ENCODE measurements at regions of chr2 and their contacts with region 1.

Region 1: DNA sequence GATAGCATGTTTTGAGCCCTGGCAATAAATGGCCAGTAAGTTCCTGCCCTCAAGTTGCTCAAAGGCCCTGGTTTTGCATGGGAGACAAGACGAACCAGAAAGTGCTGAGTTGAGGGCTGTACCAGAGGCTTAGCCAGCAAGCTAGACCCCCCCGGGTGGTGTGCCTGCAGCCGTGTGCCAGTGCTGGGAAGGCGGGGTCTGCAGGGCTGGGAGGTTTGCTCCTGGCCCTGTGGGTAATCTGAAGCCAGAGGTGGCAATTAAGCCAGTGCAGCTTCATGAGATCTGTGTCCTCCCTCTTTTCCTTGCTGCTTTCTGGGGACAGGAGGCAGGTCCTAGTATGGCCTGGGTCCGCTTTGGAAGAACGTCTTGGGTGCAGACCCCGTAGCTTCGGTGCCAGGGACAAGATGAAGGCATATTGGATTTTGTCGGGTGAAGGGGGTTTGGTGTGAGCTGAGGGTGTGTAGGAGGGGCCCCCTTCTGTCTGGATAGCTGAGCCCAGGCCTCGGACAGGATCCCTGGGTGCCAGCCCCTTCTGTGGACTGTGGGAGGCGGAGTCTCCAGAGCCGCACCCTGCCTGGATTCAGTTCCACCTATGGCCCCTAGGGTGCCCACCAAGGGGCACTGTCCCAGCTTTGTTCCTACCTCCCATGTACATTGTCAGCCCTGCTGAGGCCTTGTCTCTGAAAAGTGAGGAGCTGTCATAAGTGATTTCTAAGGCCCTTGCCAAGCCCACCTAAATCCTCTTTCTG is 15.6 kb downstream of the ATOH8 start:
- DNase-seq: peak; percentile 28 to 68 (median 66)
- ATAC-seq: no peak
- H3K4me3 ChIP-seq: no peak overlapping the region
- H3K27ac ChIP-seq: peak overlapping the region; percentile 71
- H3K4me1 ChIP-seq: peaks cover 77% of the 10 kb centered on the region
- H3K27me3 ChIP-seq: no peaks in the 10 kb centered on the region

Region 2: DNA sequence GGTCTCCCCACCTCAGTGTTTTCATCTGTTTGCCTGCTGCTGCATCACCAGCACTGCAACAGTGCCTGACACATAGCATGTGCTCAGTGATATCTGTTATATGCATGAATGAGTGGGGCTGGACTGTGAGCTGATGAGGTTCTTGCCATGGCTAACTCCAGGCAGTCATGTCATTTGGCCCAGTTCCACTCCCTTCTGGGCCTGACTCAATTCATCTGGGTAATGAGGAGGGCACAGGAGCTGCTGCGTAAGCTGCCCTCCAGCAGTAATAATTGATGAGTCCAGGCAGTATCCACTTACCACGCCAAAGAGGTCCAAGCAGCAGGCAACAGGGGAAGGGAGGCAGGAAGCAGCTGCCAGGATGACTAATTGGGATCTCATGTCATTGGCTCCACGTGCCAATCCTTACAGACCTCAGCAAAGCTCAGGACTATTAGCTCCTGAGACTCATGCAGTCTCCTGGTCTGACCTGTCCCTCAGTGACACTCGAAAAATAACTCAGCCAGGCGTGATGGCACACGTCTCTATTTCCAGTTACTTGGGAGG is 264.6 kb before region 1 on chr2:
- intact Hi-C with region 1: no loop called
- DNase-seq: peak in 1 of 3 donors; percentile 51
- ATAC-seq: peak; percentile 66 to 88
- H3K4me3 ChIP-seq: no peak overlapping the region
- H3K27ac ChIP-seq: peak overlapping the region; percentile 80
- H3K4me1 ChIP-seq: peaks cover 8% of the 10 kb centered on the region
- H3K27me3 ChIP-seq: no peaks in the 10 kb centered on the region

Region 3: GRCh38 chr2:85595301-85596025 is 173.9 kb before region 1 on chr2 and contains the start of gene RNF181:
- intact Hi-C with region 1: no loop called
- DNase-seq: peak; percentile 95 to 97 (median 95)
- ATAC-seq: peak; percentile 96 to 97
- H3K4me3 ChIP-seq: peak within 1 kb of the TSS; percentile 73
- H3K27ac ChIP-seq: peak within 1 kb of the TSS; percentile 95
- H3K4me1 ChIP-seq: peaks cover 16% of the 10 kb centered on the region
- H3K27me3 ChIP-seq: no peaks in the 10 kb centered on the region
- total RNA-seq, gene RNF181: 96.1 to 111 (median 102) TPM

Region 4: DNA sequence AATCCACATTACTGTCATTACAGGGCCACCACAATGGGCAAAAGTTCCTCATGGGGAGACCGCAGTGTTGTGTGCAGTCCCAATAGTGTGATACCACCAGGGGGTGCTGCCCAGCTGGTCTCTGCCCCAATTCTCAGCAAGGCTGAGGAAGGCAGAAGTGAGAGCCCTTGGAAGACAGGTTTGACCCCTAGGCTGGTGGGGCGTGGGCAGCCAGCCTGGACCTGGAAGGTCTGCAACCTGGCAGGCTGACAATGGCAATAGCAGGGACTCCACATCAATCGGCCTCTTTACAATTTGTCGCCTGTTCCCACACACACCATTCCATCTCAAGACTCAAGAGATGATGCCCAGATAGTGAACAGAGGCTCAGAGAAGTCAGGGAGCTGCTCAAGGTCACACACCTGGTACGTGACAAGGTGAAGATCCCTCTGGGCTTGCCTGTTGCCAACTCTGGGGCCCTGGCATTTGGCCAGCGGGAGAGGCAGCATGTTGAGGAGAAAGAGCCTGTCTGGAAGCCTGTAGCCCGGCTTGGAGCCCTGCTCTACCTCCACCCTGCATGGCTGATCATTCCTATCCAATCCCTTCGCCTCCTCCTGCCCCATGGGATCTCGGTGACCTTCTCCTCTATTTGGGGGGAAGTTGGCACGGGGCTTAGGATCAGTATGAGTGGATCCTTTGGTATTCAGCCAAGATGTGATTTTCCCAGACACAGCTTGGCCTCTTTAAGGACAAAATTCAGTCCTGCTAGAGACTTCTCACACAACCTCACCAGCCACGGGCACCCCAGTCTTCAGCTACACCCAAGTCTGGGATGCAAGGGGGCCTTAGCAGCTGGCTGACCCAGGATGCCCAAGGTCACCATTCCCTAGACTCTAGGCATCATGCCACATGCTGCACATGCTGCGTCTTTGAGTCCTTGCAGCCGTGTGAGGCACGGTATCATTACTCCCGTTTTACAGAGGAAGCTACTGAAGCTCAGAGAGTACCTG is 18.5 kb before region 1 on chr2:
- intact Hi-C with region 1: loop called in 2 of 4 experiments (anchors 2 kb)
- DNase-seq: peak; percentile 76 to 90 (median 89)
- ATAC-seq: peak; percentile 35 to 62
- H3K4me3 ChIP-seq: no peak overlapping the region
- H3K27ac ChIP-seq: peak overlapping the region; percentile 75
- H3K4me1 ChIP-seq: peaks cover 28% of the 10 kb centered on the region
- H3K27me3 ChIP-seq: no peaks in the 10 kb centered on the region